ENCODE measurements at regions of chr17 and their contacts with region 1.

Region 1: GRCh38 chr17:20992987-20993862 is 49.6 kb downstream of the USP22 start:
- DNase-seq: peak; percentile 55 to 76
- ATAC-seq: peak; percentile 43 to 70 (median 68)
- H3K4me3 ChIP-seq: peak overlapping the region; percentile 32
- H3K27ac ChIP-seq: no peak overlapping the region
- H3K4me1 ChIP-seq: no peaks in the 10 kb centered on the region
- H3K27me3 ChIP-seq: no peaks in the 10 kb centered on the region
- CTCF ChIP-seq: peak; percentile 83

Region 2: DNA sequence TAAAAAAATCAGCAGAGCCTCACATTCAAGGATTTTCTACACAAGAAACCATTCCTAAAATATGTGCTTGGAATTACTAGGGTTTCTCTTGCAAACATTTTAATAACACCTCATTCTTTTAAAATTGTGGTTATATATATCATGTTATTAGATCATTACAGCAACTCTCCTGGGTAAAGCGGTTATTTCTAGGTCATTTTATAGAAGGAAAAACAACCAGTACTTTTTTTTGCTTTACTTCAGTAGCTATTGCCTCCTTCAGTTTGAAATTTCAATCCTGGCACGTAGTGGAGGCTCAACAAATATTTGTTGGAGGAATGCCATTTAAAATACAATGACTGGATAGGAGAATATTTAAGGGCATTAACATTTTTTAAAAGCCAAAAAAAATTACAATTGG is 193.1 kb before region 1 on chr17:
- intact Hi-C with region 1: loop called in 1 of 2 experiments (anchors 10 kb)
- DNase-seq: no peak
- ATAC-seq: no peak
- H3K4me3 ChIP-seq: no peak overlapping the region
- H3K27ac ChIP-seq: no peak overlapping the region
- H3K4me1 ChIP-seq: no peaks in the 10 kb centered on the region
- H3K27me3 ChIP-seq: no peaks in the 10 kb centered on the region
- CTCF ChIP-seq: no peak

Region 3: GRCh38 chr17:20944014-20944865 is 49.0 kb before region 1 on chr17:
- intact Hi-C with region 1: loop called in 1 of 2 experiments (anchors 2 kb)
- DNase-seq: no peak
- ATAC-seq: peak in 3 of 4 donors; percentile 60 to 99 (median 68)
- H3K4me3 ChIP-seq: no peak overlapping the region
- H3K27ac ChIP-seq: no peak overlapping the region
- H3K4me1 ChIP-seq: no peaks in the 10 kb centered on the region
- H3K27me3 ChIP-seq: peaks cover 0 to 2% (median 0%) of the 10 kb centered on the region in 3 donors
- CTCF ChIP-seq: peak; percentile 32

Region 4: GRCh38 chr17:21275579-21276263 is 282.5 kb after region 1 on chr17:
- intact Hi-C with region 1: no loop called
- DNase-seq: peak; percentile 94 to 97
- ATAC-seq: peak; percentile 89 to 94 (median 92)
- H3K4me3 ChIP-seq: peak overlapping the region; percentile 74
- H3K27ac ChIP-seq: peak overlapping the region; percentile 81
- H3K4me1 ChIP-seq: peaks cover 45% of the 10 kb centered on the region
- H3K27me3 ChIP-seq: no peaks in the 10 kb centered on the region
- CTCF ChIP-seq: no peak

Measured in psoas muscle (tissue), 8 donors.